ENCODE measurements at regions of chr12 and their contacts with region 1.

Region 1: DNA sequence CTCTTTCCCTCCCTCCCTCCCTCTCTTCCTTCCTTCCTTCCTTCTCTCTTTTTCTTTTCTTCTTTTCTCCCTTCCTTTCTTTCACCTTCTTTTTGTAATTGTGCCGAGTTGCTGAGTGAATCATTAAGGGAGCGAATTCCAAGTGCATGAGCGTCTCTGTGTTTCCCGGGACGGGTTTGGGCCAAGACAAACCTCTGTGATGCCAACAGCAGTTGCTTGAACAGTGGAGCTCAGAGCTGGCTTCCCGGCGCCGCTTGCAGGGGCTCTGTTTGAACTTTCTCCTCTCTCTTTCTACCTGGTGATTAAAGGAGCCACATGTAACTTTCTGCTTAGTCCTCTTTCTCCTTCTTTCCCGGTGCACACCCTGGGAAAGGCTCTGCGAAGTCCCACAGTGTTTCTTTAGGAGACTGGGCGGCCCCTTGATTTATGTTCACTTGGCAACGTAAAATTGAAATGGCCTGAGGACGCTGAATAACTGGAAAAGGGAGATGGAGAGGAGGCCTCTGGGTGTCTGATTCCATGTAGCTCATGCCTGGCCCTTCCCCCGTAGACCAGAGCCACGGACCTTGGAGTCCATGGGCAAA is 33.7 kb upstream of the MAP1LC3B2 start:
- DNase-seq: peak; percentile 97
- ATAC-seq: peak; percentile 73
- H3K4me3 ChIP-seq: peak overlapping the region; percentile 49
- H3K27ac ChIP-seq: peak overlapping the region; percentile 96
- H3K4me1 ChIP-seq: peaks cover 63% of the 10 kb centered on the region
- H3K27me3 ChIP-seq: no peaks in the 10 kb centered on the region
- CTCF ChIP-seq: no peak

Region 2: DNA sequence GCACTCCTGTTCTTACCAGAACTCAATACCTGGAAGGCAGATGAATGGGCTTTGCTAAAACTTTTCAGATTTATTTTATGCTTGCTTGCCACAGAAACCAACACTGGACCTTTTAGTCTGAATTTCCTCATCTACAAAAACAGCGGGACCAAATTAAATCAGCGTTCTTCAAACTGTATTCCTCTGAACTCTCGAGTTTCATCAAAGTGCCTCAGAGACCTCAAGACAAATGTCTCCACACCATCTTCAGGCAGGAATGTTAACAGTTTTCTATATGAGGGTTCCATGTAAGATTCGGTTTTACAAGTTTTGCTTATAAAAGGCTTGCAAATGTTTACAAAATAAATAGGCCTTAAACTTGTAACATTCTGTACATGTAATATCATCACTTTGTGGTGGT is 322.6 kb before region 1 on chr12:
- CTCF ChIA-PET with region 1: no interaction called
- POLR2A ChIA-PET with region 1: interaction called, 29 read pairs
- intact Hi-C with region 1: no loop called
- DNase-seq: no peak
- ATAC-seq: no peak
- H3K4me3 ChIP-seq: no peak overlapping the region
- H3K27ac ChIP-seq: no peak overlapping the region
- H3K4me1 ChIP-seq: peaks cover 8% of the 10 kb centered on the region
- H3K27me3 ChIP-seq: no peaks in the 10 kb centered on the region
- CTCF ChIP-seq: no peak

Region 3: GRCh38 chr12:116382686-116383531 is 142.6 kb before region 1 on chr12:
- CTCF ChIA-PET with region 1: no interaction called
- POLR2A ChIA-PET with region 1: no interaction called
- intact Hi-C with region 1: loop called (anchors 2 kb)
- DNase-seq: peak; percentile 94
- ATAC-seq: peak; percentile 69
- H3K4me3 ChIP-seq: no peak overlapping the region; the same call in 1 of the 2 replicates
- H3K27ac ChIP-seq: peak overlapping the region; percentile 88
- H3K4me1 ChIP-seq: peaks cover 39% of the 10 kb centered on the region
- H3K27me3 ChIP-seq: no peaks in the 10 kb centered on the region
- CTCF ChIP-seq: no peak

Region 4: DNA sequence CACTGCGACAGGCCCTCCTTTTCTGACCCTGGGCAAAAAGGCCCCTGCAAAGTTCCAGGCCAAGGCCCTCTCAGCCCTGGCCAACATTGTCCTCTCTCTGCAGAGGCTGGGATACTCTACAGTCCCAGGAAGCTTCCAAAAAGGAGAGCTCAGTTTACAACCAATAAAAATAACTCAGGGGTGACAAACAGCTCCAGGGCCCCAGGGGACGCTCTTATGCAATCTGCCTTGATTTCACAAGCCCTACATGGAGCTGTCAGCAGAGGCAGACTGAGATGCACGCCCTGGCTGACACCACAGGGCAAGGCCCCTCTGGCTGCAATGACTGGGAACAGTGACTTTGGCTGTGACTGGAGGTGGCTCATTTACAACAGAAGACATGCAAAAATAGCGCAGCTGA is 119.0 kb before region 1 on chr12:
- CTCF ChIA-PET with region 1: interaction called, 6 read pairs
- POLR2A ChIA-PET with region 1: no interaction called
- intact Hi-C with region 1: loop called (anchors 5 kb)
- DNase-seq: peak; percentile 99
- ATAC-seq: peak; percentile 97
- H3K4me3 ChIP-seq: no peak overlapping the region
- H3K27ac ChIP-seq: peak overlapping the region; percentile 74
- H3K4me1 ChIP-seq: peaks cover 25% of the 10 kb centered on the region
- H3K27me3 ChIP-seq: no peaks in the 10 kb centered on the region
- CTCF ChIP-seq: peak; percentile 50

Region 5: GRCh38 chr12:116434155-116435011 is 91.1 kb before region 1 on chr12:
- CTCF ChIA-PET with region 1: no interaction called
- POLR2A ChIA-PET with region 1: interaction called, 3 read pairs
- intact Hi-C with region 1: loop called (anchors 2 kb)
- DNase-seq: peak; percentile 95
- ATAC-seq: peak; percentile 87
- H3K4me3 ChIP-seq: peak overlapping the region; percentile 61
- H3K27ac ChIP-seq: peak overlapping the region; percentile 88
- H3K4me1 ChIP-seq: peaks cover 20% of the 10 kb centered on the region
- H3K27me3 ChIP-seq: no peaks in the 10 kb centered on the region
- CTCF ChIP-seq: no peak

Region 6: DNA sequence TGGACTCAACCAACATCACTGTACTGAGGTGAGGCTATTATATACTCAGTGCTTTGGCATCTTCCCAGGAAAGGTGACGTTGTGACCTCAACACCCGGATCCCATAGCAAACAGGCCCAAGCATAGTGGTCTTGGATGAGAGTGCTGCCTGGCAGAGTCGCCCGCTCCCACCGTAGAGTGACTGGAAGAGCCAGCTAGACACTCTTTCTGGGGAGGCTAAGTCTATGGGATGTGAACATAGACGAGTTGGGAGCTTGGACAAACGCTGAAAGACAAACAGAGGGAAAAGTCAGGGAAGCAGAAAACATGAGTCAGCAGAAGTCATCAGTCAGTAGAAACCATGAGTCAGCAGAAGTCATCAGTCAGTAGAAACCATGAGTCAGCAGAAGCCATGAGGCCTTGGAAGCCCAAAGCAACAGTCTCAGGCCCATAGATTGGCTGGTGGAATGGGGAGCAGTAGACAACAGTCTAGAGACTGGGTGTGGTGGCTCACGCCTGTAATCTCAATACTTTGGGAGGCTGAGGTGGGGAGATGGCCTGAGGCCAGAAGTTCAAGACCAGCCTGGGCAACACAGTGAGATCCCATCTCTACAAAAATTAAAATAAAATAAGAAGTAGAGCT is 32.7 kb before region 1 on chr12:
- CTCF ChIA-PET with region 1: no interaction called
- POLR2A ChIA-PET with region 1: no interaction called
- intact Hi-C with region 1: loop called (anchors 2 kb)
- DNase-seq: peak; percentile 98
- ATAC-seq: peak; percentile 61
- H3K4me3 ChIP-seq: no peak overlapping the region
- H3K27ac ChIP-seq: peak overlapping the region; percentile 96
- H3K4me1 ChIP-seq: peaks cover 67% of the 10 kb centered on the region
- H3K27me3 ChIP-seq: no peaks in the 10 kb centered on the region
- CTCF ChIP-seq: no peak

Region 7: DNA sequence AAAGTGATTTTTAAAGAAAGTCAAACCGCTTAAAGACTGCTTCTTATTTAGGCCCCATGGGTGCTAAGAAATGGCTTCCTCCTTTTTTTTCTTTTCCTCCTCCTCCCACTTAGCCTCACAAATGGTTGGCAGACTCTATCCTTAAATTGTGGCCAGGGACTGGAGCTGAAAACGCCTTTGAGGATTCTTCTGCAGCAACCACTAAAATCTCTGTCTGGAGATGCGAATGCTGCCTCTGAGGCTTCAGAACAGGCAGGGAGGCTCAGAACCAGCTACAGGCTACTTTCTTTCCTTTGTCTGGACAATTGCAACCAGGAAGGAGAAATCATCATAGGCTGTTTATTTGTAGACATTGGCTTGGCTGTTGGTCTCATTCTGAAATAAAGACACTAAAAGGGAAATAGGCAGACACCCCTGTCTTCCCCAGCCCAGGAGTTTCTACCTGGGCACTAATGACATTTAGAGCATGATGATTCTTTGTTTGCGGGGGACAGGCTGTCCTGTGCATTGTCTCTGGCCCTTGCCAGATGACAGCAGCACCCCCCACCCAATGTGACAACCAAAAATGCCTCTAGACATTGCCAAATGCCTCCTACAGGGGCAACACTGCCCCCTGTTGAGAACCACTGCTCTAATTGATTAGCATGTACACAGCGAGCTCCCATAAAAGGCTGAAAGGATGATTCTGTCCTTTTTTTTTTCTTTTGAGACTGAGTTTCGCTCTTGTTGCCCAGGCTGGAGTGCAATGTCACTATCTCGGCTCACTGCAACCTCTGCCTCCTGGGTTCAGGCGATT is 84.0 kb after region 1 on chr12:
- CTCF ChIA-PET with region 1: no interaction called
- POLR2A ChIA-PET with region 1: no interaction called
- intact Hi-C with region 1: no loop called
- DNase-seq: peak; percentile 40
- ATAC-seq: no peak
- H3K4me3 ChIP-seq: no peak overlapping the region
- H3K27ac ChIP-seq: no peak overlapping the region
- H3K4me1 ChIP-seq: peaks cover 17% of the 10 kb centered on the region
- H3K27me3 ChIP-seq: no peaks in the 10 kb centered on the region
- CTCF ChIP-seq: peak; percentile 62

Region 8: DNA sequence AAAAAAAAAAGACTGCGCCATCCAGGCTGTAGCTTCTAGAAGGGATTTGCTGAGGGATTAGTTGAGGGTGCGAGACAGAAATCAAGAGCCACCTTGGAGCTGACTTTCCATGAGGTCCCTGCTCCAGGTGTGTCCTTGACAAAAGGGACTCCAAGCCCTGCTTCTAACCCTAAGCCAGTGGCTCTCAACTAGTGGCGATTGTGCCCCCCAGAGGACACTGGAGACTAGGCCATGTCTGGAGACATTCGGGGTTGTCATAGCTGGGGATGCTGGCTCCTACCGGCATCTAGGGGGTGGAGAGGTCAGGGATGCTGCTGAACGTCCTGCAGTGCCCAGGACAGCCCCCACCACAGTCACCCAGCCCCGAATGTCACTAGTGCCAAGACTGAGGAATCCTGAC is 171.8 kb after region 1 on chr12:
- CTCF ChIA-PET with region 1: no interaction called
- POLR2A ChIA-PET with region 1: no interaction called
- intact Hi-C with region 1: loop called (anchors 10 kb)
- DNase-seq: peak; percentile 58
- ATAC-seq: peak; percentile 75
- H3K4me3 ChIP-seq: no peak overlapping the region
- H3K27ac ChIP-seq: peak overlapping the region; percentile 36
- H3K4me1 ChIP-seq: peaks cover 19% of the 10 kb centered on the region
- H3K27me3 ChIP-seq: no peaks in the 10 kb centered on the region
- CTCF ChIP-seq: peak; percentile 64